ENCODE measurements at regions of chr16 and their contacts with region 1.

Region 1: DNA sequence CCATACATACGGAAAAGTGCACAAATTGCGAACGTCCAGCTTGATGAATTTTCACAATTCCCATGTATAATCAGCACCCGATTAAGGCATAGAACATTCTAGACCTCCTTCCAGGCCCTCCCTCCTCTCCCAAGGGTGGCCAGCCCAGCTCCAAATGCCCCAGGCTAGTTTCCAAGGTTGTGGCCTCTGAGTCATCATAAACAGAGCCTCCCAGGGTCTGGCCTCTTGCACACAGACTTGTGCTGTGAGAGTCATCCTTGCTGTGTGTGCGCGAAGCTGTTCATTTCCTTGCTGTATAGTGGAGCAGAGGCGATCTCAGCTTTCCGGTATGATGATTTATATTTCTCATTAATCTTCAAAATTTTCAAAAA is 20.5 kb upstream of the JPH3 start:
- DNase-seq: peak; percentile 84 to 90 (median 88)
- ATAC-seq: peak; percentile 90 to 92
- H3K4me3 ChIP-seq: no peak overlapping the region
- H3K27ac ChIP-seq: peak overlapping the region; percentile 68
- H3K4me1 ChIP-seq: no peaks in the 10 kb centered on the region
- H3K27me3 ChIP-seq: no peaks in the 10 kb centered on the region

Region 2: DNA sequence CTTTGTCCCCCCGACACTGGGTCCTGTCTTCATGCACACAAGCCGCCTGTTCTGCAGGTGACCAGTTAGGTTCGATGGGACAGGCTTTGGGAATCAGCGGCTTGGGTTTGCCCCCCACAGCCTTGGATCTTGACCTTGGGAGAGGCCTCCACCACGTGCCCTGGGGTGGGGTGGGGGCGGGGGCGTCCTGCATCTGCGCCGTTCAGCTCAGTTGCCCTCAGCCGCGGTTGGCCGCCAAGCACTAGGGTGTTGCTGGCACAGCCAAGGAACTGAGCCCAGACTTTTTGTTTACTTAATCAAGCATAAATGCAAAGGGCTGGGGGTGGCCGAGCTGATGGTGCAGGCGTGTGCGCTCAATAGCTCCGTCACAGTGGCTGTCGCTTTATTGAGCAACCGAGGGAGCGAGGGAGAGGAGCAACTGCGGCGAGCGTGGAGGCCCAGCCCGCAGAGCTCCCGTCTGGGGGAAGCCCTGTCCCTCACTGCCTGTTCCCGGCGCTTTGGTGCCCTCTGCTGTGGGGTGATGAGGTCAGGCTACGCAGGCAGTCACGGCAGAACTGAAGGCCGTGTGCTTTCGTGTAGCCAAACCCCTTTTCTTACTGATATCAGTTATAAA is 54.4 kb after region 1 on chr16:
- intact Hi-C with region 1: loop called in 1 of 4 experiments (anchors 5 kb)
- DNase-seq: peak; percentile 87 to 94 (median 94)
- ATAC-seq: peak; percentile 92 to 95
- H3K4me3 ChIP-seq: no peak overlapping the region
- H3K27ac ChIP-seq: no peak overlapping the region
- H3K4me1 ChIP-seq: no peaks in the 10 kb centered on the region
- H3K27me3 ChIP-seq: no peaks in the 10 kb centered on the region

Region 3: DNA sequence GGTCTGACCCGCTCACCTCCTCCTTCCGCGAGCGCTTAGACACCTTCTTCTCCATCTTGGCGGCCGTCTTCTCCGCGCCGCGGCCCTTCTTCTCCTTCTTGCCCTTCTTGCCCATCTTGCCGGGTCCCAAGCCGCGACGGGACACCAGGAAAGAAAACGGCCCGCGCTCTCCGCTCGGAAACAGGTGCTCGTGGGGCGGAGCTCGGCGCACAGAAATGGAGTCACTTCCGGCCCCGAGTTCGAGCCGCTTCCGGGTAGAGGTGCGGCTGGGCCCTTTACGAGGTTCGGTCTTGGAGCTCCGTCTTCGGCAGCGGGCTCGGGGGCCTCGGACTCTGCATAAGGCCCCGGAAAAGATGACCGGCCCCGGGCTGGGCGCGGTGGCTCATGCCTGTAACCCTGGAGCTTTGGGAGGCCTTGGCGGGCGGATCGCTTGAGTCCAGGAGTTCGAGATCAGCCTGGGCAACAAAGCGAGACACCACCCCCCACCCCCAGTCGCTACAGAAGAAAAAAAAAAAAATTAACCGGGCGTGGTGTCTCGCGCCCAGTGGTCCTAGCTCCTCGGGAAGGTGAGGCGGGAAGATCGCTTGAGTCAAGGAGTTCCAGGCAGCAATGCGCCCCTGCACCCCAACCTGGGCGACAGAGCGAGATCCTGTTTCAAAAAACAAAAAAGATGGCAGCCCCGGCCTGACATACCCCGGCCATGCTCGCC is 184.1 kb after region 1 on chr16 and contains the start of gene KLHDC4:
- intact Hi-C with region 1: loop called (anchors 5 to 10 kb)
- DNase-seq: peak; percentile 87 to 95 (median 95)
- ATAC-seq: peak; percentile 94
- H3K4me3 ChIP-seq: peak within 1 kb of the TSS; percentile 91
- H3K27ac ChIP-seq: peak within 1 kb of the TSS; percentile 95
- H3K4me1 ChIP-seq: peaks cover 7% of the 10 kb centered on the region
- H3K27me3 ChIP-seq: no peaks in the 10 kb centered on the region
- total RNA-seq, gene KLHDC4: 11.4 to 16.5 (median 15.2) TPM